CD4-positive, alpha-beta memory T cell (primary cell): ENCODE measurements at regions of chr2 and their contacts with region 1.

Region 1: DNA sequence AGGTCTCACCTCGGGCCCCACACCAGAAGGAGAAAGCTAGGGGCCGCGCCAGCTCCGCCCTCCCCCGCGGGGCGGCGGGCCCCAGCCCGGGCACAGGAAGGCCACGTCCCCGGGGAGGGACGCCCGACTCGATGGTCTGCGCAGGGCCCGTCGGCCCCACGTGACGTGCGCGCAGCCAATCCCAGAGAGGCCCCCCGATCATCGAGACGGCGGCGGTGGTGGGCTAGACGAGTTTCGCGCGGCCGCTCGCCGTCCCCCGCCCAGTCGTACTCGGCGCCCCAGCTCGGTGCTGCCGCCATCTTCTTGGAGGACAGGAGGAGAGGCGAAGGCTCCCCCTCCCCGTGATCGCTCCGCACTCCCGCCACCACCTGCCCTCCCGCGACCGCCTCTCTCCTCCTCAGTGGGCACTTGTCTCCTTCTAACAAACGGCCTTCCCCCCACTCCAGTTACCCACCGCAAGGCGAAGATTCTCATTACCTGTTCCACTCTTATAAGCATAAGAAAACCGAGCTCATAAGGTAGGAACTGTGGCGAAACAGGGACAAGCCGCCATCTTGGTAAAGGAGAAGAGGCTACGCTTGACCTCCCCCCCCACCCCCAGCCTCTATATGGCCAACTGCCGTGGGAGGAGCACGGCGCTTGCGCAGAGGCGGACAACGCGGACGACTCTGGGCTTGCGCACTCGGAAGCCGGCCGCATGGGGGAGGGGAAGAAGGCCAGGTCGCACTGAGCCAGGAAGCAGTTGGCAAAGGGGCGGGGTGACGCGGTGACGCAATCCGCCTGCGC is at the start of gene HDLBP:
- DNase-seq: peak; percentile 100
- H3K4me3 ChIP-seq: peak within 1 kb of the TSS; percentile 87
- H3K4me3 Mint-ChIP-seq: peak within 1 kb of the TSS; percentile 94 to 100 (median 98)
- H3K27ac ChIP-seq: peak within 1 kb of the TSS; percentile 96
- H3K27ac Mint-ChIP-seq: peak within 1 kb of the TSS; percentile 98 to 100 (median 99)
- H3K4me1 ChIP-seq: peaks cover 82% of the 10 kb centered on the region
- H3K4me1 Mint-ChIP-seq: peaks cover 54 to 92% (median 70%) of the 10 kb centered on the region in 4 donors
- H3K27me3 ChIP-seq: no peaks in the 10 kb centered on the region
- H3K27me3 Mint-ChIP-seq: peaks cover 0 to 1% of the 10 kb centered on the region in 2 donors
- total RNA-seq, gene HDLBP: 166 to 183 TPM

Region 2: DNA sequence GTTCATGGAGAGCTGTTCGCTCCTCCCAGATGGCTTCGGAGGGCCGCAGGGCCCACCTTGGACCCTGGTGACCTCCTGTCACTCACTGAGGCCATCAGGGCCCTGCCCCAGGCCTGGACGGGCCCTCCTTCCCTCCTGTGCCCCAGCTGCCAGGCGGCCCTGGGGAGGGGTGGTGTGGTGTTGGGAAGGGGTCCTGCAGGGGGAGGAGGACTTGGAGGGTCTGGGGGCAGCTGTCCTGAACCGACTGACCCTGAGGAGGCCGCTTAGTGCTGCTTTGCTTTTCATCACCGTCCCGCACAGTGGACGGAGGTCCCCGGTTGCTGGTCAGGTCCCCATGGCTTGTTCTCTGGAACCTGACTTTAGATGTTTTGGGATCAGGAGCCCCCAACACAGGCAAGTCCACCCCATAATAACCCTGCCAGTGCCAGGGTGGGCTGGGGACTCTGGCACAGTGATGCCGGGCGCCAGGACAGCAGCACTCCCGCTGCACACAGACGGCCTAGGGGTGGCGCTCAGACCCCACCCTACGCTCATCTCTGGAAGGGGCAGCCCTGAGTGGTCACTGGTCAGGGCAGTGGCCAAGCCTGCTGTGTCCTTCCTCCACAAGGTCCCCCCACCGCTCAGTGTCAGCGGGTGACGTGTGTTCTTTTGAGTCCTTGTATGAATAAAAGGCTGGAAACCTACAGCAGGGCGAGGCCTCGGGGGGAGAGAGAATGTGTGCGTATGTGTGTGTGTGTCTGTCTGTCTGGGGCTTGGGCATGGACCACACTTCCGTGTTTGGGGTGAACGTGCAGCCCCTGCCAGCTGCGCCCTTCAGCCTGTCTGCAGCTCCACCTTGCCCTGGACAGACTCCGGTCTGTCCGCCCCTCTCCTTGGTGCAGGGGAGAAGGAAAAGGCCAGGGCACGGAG is 847.6 kb before region 1 on chr2:
- CTCF ChIA-PET with region 1: no interaction called
- POLR2A ChIA-PET with region 1: no interaction called
- intact Hi-C with region 1: no loop called
- DNase-seq: no peak
- H3K4me3 ChIP-seq: no peak overlapping the region
- H3K4me3 Mint-ChIP-seq: no peak overlapping the region
- H3K27ac ChIP-seq: no peak overlapping the region
- H3K27ac Mint-ChIP-seq: no peak overlapping the region
- H3K4me1 ChIP-seq: no peaks in the 10 kb centered on the region
- H3K4me1 Mint-ChIP-seq: peaks cover 0 to 5% (median 0%) of the 10 kb centered on the region in 4 donors
- H3K27me3 ChIP-seq: no peaks in the 10 kb centered on the region
- H3K27me3 Mint-ChIP-seq: no peaks in the 10 kb centered on the region

Region 3: GRCh38 chr2:240832205-240832727 is 483.0 kb before region 1 on chr2:
- CTCF ChIA-PET with region 1: no interaction called
- POLR2A ChIA-PET with region 1: no interaction called
- intact Hi-C with region 1: loop called (anchors 1 kb)
- DNase-seq: peak; percentile 98 to 99 (median 99)
- H3K4me3 ChIP-seq: peak overlapping the region; percentile 34 to 36
- H3K4me3 Mint-ChIP-seq: peak overlapping the region in 6 of 8 donors; percentile 12 to 81 (median 66)
- H3K27ac ChIP-seq: no peak overlapping the region
- H3K27ac Mint-ChIP-seq: peak overlapping the region in 3 of 7 donors; percentile 55 to 91 (median 82)
- H3K4me1 ChIP-seq: peaks cover 12% of the 10 kb centered on the region
- H3K4me1 Mint-ChIP-seq: peaks cover 0 to 6% (median 3%) of the 10 kb centered on the region in 4 donors
- H3K27me3 ChIP-seq: peaks cover 10% of the 10 kb centered on the region
- H3K27me3 Mint-ChIP-seq: peaks cover 8 to 16% of the 10 kb centered on the region in 2 donors

Region 4: GRCh38 chr2:241149925-241150659 is 165.2 kb before region 1 on chr2 and contains the start of gene PPP1R7:
- CTCF ChIA-PET with region 1: no interaction called
- POLR2A ChIA-PET with region 1: interaction called, 22 read pairs
- intact Hi-C with region 1: loop called (anchors 1 kb)
- DNase-seq: peak; percentile 94 to 97 (median 95)
- H3K4me3 ChIP-seq: peak within 1 kb of the TSS; percentile 70 to 93
- H3K4me3 Mint-ChIP-seq: peak within 1 kb of the TSS; percentile 93 to 100 (median 100)
- H3K27ac ChIP-seq: peak within 1 kb of the TSS; percentile 75
- H3K27ac Mint-ChIP-seq: peak within 1 kb of the TSS; percentile 94 to 99 (median 97)
- H3K4me1 ChIP-seq: peaks cover 26% of the 10 kb centered on the region
- H3K4me1 Mint-ChIP-seq: peaks cover 29 to 51% (median 44%) of the 10 kb centered on the region in 4 donors
- H3K27me3 ChIP-seq: no peaks in the 10 kb centered on the region
- H3K27me3 Mint-ChIP-seq: no peaks in the 10 kb centered on the region
- total RNA-seq, gene PPP1R7: 61.3 to 68.9 TPM

Region 5: DNA sequence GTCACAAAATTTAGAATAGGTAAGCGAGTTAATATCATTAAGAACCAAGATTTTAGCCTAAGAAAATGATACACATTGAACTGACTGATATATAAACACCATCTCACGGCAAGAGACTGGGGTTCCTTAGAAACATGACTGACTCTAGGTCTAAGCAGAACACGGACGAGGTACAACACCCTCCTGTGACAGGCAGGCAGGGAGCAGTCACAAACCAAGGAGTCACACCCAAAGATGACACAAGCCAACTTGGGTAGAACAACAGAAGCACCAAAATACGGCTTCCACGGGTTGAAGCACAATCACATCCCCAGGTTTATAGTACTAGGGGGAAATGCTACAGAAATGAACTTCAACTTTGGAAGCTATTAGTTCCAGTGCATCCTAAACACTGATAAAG is 24.1 kb before region 1 on chr2:
- CTCF ChIA-PET with region 1: no interaction called
- POLR2A ChIA-PET with region 1: interaction called, 14 read pairs
- intact Hi-C with region 1: no loop called
- DNase-seq: no peak
- H3K4me3 ChIP-seq: no peak overlapping the region
- H3K4me3 Mint-ChIP-seq: no peak overlapping the region
- H3K27ac ChIP-seq: no peak overlapping the region
- H3K27ac Mint-ChIP-seq: peak overlapping the region in 1 of 7 donors; percentile 51
- H3K4me1 ChIP-seq: peaks cover 17% of the 10 kb centered on the region
- H3K4me1 Mint-ChIP-seq: peaks cover 31 to 66% (median 45%) of the 10 kb centered on the region in 4 donors
- H3K27me3 ChIP-seq: no peaks in the 10 kb centered on the region
- H3K27me3 Mint-ChIP-seq: no peaks in the 10 kb centered on the region

Region 6: DNA sequence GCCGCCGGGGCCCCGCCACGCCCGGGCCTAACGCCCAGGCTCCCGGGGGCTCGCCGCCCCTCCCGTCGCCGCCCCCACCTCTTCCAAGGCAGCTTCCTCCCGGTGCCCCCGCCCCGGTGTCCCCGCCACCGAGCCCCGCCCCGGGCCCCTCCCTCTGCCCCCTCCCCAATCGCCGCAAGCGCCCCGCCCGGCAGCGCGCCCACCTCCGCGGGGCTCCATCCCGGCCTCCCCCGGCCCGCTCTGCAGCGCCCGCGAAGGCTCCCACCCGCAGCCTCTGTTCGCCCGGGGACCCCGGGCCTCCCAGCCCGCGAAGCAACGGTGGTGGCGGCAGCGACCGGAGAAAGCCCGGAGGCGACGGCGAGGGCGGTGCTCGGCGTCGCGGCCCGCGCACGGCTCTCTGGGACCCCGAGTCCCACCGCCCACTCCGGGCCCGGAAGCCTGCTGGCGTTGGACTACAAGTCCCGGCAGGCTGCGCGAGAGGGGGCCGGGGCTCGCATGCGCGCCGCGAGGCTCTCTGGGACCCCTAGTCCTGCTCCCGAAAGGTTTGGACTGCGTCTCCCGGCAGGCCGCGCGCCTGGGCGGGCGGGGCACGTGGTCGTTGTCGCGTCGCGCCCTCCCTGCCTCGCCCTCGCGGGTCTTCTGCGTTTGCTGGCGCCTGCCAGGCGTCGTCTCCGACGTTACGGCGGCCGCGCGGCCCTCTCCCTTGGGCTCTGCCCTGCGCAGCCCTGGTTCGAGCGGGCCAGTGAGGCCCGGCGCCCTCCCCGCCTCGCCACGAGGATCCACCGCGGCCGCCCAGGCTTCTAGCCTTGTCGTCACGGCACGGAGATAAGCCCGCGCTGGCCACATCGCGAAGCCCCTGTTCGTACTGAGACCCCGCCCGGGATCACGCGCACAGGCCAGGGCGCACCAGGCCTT is 193.2 kb after region 1 on chr2 and contains the start of gene STK25:
- CTCF ChIA-PET with region 1: no interaction called
- POLR2A ChIA-PET with region 1: no interaction called
- intact Hi-C with region 1: loop called (anchors 1 kb)
- DNase-seq: peak; percentile 97 to 98 (median 98)
- H3K4me3 ChIP-seq: peak within 1 kb of the TSS; percentile 29 to 58
- H3K4me3 Mint-ChIP-seq: peak within 1 kb of the TSS; percentile 81 to 85 (median 83)
- H3K27ac ChIP-seq: peak within 1 kb of the TSS; percentile 82
- H3K27ac Mint-ChIP-seq: peak within 1 kb of the TSS; percentile 62 to 94 (median 75)
- H3K4me1 ChIP-seq: peaks cover 18% of the 10 kb centered on the region
- H3K4me1 Mint-ChIP-seq: peaks cover 11 to 41% (median 22%) of the 10 kb centered on the region in 4 donors
- H3K27me3 ChIP-seq: no peaks in the 10 kb centered on the region
- H3K27me3 Mint-ChIP-seq: no peaks in the 10 kb centered on the region
- total RNA-seq, gene STK25: 178 to 182 TPM

Region 7: GRCh38 chr2:241877989-241878970 is 563.0 kb after region 1 on chr2:
- CTCF ChIA-PET with region 1: no interaction called
- POLR2A ChIA-PET with region 1: no interaction called
- intact Hi-C with region 1: loop called (anchors 5 kb)
- DNase-seq: peak; percentile 67 to 80 (median 75)
- H3K4me3 ChIP-seq: no peak overlapping the region
- H3K4me3 Mint-ChIP-seq: no peak overlapping the region
- H3K27ac ChIP-seq: no peak overlapping the region
- H3K27ac Mint-ChIP-seq: peak overlapping the region in 3 of 7 donors; percentile 15 to 77 (median 52)
- H3K4me1 ChIP-seq: peaks cover 29% of the 10 kb centered on the region
- H3K4me1 Mint-ChIP-seq: peaks cover 11 to 38% (median 28%) of the 10 kb centered on the region in 4 donors
- H3K27me3 ChIP-seq: no peaks in the 10 kb centered on the region
- H3K27me3 Mint-ChIP-seq: peaks cover 0 to 3% of the 10 kb centered on the region in 2 donors